Psoas muscle (tissue), 8 donors: ENCODE measurements at regions of chr14 and their contacts with region 1.

Region 1: DNA sequence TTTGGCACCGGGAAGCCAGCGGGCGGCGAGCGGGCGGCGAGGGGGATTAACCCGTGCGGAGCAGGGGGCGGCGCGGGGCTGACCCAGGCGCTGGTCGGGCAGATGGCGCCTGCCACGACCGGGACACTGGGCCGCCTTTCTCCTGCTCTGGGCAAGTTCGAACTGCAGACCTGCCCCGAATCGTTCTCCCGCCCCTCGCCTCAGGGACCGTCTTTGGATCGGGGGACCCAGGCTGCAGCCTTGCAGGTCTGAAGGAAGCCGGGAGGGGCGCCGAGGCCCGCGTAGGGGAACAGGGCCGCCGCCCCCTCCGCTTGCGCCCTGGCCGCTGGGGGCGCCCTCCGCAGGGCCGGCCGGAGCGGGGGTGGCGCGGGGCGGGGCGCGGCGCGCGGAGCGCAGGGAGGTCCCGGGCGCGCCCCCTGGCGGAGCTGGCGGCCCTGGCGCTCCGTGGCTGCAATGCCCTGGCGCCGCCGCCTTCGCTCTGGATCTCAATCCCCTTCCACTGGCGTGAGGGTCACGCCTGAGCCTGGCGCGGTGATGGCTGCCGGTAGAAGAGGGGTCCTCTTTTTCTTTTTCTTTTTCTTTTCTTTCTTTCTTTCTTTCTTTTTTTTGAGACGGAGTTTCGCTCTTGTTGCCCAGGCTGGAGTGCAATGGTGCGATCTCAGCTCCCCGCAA is 449 bp upstream of the LTBP2 start:
- DNase-seq: peak; percentile 88 to 92
- ATAC-seq: peak; percentile 83 to 93 (median 88)
- H3K4me3 ChIP-seq: peak overlapping the region; percentile 84
- H3K27ac ChIP-seq: no peak overlapping the region
- H3K4me1 ChIP-seq: peaks cover 21% of the 10 kb centered on the region
- H3K27me3 ChIP-seq: peaks cover 0 to 13% (median 7%) of the 10 kb centered on the region in 3 donors
- CTCF ChIP-seq: peak; percentile 91

Region 2: GRCh38 chr14:74362361-74362915 is 250.0 kb before region 1 on chr14:
- intact Hi-C with region 1: loop called in 1 of 2 experiments (anchors 2 kb)
- DNase-seq: peak; percentile 83 to 90
- ATAC-seq: peak; percentile 85 to 92 (median 90)
- H3K4me3 ChIP-seq: no peak overlapping the region
- H3K27ac ChIP-seq: no peak overlapping the region
- H3K4me1 ChIP-seq: no peaks in the 10 kb centered on the region
- H3K27me3 ChIP-seq: peaks cover 0 to 8% (median 4%) of the 10 kb centered on the region in 3 donors
- CTCF ChIP-seq: peak; percentile 92

Region 3: DNA sequence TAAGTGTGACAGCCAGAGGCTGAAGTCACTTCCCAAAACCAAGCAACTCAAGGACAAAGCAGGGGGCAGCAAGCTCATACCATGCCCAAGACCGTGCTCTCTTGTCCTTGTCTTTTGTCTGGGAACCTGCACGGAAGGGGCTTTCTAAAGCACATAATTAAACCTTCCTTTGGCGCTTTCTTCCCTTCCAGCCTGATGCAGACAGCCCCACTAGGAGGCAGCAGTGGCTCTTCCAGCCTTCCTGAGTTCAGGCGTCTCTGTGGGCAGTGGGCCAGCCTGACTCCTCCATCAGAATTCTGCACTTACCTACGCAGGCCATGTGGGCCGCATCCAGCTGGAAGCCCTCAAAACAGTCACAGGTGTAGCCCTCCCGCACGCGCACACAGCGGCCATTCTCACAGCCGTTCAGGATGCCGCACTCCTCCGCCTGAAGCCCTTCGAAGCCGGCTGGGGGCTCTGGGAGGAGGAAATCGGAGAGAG is 111.3 kb before region 1 on chr14:
- intact Hi-C with region 1: loop called in 1 of 2 experiments (anchors 2 kb)
- DNase-seq: peak; percentile 76 to 79
- ATAC-seq: peak in 3 of 4 donors; percentile 34 to 70 (median 55)
- H3K4me3 ChIP-seq: no peak overlapping the region
- H3K27ac ChIP-seq: no peak overlapping the region
- H3K4me1 ChIP-seq: no peaks in the 10 kb centered on the region
- H3K27me3 ChIP-seq: no peaks in the 10 kb centered on the region
- CTCF ChIP-seq: peak; percentile 47

Region 4: DNA sequence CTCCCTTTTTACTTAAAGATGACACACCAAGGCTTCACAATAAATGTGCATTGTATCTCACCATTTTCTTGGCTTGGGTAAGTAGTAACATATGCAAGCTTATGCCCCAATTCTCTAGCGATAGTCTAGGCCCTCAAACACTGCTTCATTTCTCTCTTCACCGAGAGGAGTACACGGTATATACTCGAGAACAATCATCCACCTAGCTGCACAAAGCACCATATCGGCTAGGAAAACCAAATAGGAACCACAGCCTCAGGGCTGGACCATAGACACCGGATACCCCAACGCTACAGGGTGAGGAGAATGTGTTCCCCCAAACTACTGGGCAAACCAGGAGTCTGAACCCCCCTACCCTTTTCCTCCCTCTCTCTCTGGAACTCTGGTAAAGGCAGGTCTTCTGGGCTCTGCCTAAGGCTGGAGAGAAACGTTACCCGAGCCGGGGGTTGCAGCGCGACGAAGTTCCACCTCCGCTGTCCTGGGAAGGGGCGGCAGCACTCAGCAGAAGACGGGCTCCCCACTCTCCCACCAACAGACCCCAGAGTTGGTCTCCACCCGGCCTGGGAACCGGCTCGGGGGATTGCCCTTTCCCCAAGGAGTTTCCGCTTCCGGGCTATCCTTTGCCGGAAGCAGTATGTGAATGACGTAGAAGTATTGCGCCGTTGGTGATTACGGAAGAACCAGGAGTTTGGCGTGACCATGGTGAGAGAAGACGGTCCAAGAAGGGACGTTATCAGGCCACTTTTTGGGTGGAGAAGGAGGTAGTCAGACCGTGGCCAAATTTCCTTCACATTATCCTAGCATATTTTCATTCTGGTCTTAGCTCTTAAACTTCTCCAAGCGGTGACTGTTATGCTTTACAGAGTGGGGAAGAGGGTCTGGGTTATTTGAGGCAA is 100.3 kb after region 1 on chr14 and contains the starts of genes AREL1 and FCF1:
- intact Hi-C with region 1: loop called in 1 of 2 experiments (anchors 5 kb)
- DNase-seq: peak; percentile 78 to 86
- ATAC-seq: peak; percentile 98 to 100 (median 99)
- H3K4me3 ChIP-seq: peak within 1 kb of the TSS; percentile 79
- H3K27ac ChIP-seq: peak within 1 kb of the TSS; percentile 73
- H3K4me1 ChIP-seq: peaks cover 40% of the 10 kb centered on the region
- H3K27me3 ChIP-seq: no peaks in the 10 kb centered on the region
- CTCF ChIP-seq: no peak
- total RNA-seq, gene AREL1: 15.0 to 24.6 (median 18.7) TPM
- total RNA-seq, gene FCF1: 22.9 to 33.5 (median 29.1) TPM

Region 5: DNA sequence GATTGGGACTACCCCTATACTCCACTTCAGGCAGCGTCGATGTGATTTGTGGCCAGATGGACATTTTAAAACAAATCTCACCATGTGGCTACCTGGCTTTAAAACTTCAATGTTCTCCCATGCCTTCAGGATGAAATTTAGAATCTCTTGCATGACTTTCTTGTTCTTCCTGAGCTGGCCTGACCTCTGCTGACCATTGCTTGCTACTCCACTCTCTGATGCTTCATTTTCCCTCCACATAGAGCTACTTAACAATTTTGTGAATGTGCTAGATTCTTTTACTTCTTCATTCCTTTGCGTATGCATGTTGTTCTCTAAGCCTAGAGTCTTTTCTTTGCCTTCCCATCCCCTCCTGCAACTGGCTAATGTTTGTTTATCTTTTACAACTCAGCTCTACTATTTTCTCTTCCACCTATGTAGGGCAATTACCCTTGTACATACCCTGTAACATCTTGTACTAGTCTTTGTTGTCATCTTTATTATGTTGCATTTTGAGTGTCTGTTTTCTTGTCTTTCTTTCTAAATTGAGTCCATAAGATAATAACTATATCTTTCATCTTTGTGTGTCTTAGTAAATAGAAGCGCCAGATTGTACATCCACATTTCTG is 191.8 kb after region 1 on chr14:
- intact Hi-C with region 1: loop called (anchors 2 to 5 kb)
- DNase-seq: no peak
- ATAC-seq: peak in 2 of 4 donors; percentile 38 to 79
- H3K4me3 ChIP-seq: no peak overlapping the region
- H3K27ac ChIP-seq: no peak overlapping the region
- H3K4me1 ChIP-seq: no peaks in the 10 kb centered on the region
- H3K27me3 ChIP-seq: no peaks in the 10 kb centered on the region
- CTCF ChIP-seq: peak; percentile 59